Caco-2 (cell line): ENCODE measurements at regions of chr6 and their contacts with region 1.

Region 1: GRCh38 chr6:108989700-108990099 is 104.9 kb downstream of the SESN1 start:
- DNase-seq: peak; percentile 71 to 80
- H3K4me3 ChIP-seq: no peak overlapping the region
- H3K4me3 Mint-ChIP-seq: peak overlapping the region; percentile 29
- H3K27ac Mint-ChIP-seq: peak overlapping the region; percentile 82
- H3K4me1 ChIP-seq: peaks cover 31% of the 10 kb centered on the region
- H3K4me1 Mint-ChIP-seq: peaks cover 33% of the 10 kb centered on the region
- H3K27me3 ChIP-seq: no peaks in the 10 kb centered on the region
- H3K27me3 Mint-ChIP-seq: no peaks in the 10 kb centered on the region
- CTCF ChIP-seq: no peak

Region 2: DNA sequence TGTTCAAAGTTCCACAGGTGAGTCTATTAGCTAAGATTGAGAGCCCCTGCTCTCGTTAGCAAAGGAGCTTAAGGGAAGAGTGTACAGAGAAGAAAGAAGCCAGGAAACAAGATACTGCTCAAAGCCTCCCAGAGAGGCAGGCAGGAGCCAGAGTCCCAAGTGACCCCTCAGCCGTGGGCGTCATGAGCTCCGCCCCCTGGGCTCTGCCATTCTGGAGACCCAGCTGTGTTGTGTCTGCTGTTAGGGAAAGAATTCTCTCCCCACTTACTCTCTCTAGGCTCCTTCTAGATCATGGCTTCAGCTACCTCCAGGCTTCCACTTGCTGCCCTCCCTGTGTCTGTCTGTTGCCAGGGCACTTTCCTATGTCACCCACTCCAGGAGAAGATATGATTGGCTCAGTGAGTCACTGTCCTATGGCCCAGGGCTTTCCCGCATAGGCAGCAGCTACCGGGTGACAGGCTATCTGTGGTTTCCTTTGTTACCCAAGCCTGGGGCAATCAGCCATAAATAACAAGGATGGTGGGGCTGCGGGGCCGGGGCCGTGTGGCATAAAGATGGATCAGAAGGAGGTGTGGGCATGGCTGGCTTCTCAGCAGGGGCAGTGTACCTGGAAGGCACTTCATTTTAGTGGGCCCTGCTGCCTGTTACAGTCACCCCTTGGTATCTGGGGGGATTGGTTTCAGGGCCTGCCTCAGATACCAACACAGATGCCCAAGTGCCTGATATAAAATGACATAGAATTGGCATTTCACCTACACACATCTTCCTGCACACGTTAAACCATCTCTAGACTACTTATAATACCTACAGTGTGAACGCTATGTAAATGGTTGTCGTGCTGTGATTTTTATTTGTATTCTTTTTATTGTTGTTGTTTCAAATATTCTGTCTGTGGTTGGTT is 22.6 kb before region 1 on chr6:
- CTCF ChIA-PET with region 1: interaction called, 3 read pairs
- POLR2A ChIA-PET with region 1: interaction called, 3 read pairs
- intact Hi-C with region 1: loop called (anchors 1 kb)
- DNase-seq: peak in 1 of 2 experiments; percentile 13
- H3K4me3 ChIP-seq: no peak overlapping the region
- H3K4me3 Mint-ChIP-seq: no peak overlapping the region
- H3K27ac Mint-ChIP-seq: peak overlapping the region; percentile 24
- H3K4me1 ChIP-seq: peaks cover 21% of the 10 kb centered on the region
- H3K4me1 Mint-ChIP-seq: peaks cover 7% of the 10 kb centered on the region
- H3K27me3 ChIP-seq: no peaks in the 10 kb centered on the region
- H3K27me3 Mint-ChIP-seq: no peaks in the 10 kb centered on the region
- CTCF ChIP-seq: no peak

Region 3: GRCh38 chr6:109117346-109118035 is 127.8 kb after region 1 on chr6:
- CTCF ChIA-PET with region 1: no interaction called
- POLR2A ChIA-PET with region 1: no interaction called
- intact Hi-C with region 1: no loop called
- DNase-seq: no peak
- H3K4me3 ChIP-seq: no peak overlapping the region
- H3K4me3 Mint-ChIP-seq: no peak overlapping the region
- H3K27ac Mint-ChIP-seq: no peak overlapping the region
- H3K4me1 ChIP-seq: 0 out of 2 replicates have a peak, but pooled peaks cover 9% of the 10 kb centered on the region
- H3K4me1 Mint-ChIP-seq: peaks cover 15% of the 10 kb centered on the region
- H3K27me3 ChIP-seq: no peaks in the 10 kb centered on the region
- H3K27me3 Mint-ChIP-seq: no peaks in the 10 kb centered on the region
- CTCF ChIP-seq: no peak